ENCODE measurements at regions of chr1 and their contacts with region 1.

Region 1: DNA sequence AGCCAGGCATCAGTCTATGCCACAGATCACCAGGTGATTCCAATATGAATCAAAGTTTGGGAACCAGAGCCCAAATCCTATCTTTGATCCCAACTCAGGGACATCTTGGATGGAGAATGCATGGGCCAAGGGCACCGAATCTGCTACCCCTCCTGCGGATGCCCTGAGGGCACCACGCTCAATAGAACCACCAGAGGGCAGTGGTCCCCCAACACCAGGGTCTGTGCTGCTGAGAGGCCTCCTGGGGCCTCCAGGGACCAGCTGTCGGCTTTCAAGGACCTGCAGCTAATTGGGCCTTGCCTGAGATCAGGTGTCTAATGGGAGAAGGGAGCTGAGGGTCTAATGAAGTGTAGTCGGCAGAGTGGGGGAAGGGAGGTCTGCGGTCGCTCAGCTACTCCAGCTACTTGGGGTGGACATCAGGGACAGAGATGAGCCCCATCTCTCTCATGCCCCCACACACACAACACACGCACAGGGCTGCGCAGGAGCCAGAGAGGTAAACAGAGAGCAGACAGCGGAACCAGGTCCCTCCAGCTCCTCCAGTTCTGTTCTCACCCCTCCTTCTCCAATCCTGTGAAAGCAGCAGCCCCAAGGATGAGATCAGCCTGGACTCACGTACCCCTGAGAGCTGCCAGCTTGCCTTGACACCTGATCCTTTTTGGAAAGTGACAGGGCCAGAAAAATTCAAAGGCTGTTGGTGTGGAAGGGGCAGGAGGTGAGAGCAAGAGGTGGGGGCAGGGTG is 34.9 kb upstream of the PPP1R15B start:
- DNase-seq: peak; percentile 61 to 83 (median 75)
- ATAC-seq: peak; percentile 97
- H3K4me3 ChIP-seq: no peak overlapping the region
- H3K4me3 Mint-ChIP-seq: no peak overlapping the region
- H3K27ac ChIP-seq: peak overlapping the region; percentile 4
- H3K27ac Mint-ChIP-seq: peak overlapping the region; percentile 54 to 92 (median 73)
- H3K4me1 ChIP-seq: peaks cover 0 to 8% of the 10 kb centered on the region in 2 donors
- H3K4me1 Mint-ChIP-seq: peaks cover 3 to 32% (median 10%) of the 10 kb centered on the region in 7 donors
- H3K27me3 ChIP-seq: no peaks in the 10 kb centered on the region
- H3K27me3 Mint-ChIP-seq: no peaks in the 10 kb centered on the region

Region 2: DNA sequence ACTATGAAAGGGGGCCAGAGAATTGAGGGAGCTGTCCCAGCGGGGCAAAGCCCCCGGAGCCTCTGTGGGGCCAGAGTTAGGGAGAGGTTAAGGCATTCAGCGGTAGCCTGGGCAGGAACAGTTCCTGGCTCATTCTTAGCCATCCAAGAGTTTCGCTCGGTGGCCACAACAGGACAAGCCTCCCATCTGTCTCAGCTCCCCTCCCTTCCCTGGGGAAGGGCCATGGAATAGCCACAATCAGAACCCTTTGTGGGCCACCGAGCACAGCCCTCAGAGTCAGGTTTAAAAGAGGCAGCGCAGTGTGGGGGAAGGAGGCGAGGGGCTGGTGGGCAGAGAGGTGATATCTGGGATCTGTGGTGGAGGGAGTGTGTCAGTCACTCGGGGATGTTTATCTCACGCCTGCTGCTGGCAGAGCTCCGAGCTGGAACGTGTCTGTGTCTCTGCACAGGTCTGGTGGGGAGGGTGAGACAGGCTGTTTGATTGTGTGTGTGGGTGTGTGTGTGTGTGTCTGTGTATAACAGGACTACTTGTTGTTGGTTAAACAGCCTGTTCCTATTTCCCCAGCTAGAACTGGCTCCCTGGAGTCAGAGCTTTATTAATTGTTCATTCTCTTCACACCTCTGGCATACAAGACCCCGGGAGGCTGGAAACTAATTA is 183.2 kb before region 1 on chr1:
- CTCF ChIA-PET with region 1: no interaction called
- POLR2A ChIA-PET with region 1: no interaction called
- intact Hi-C with region 1: no loop called
- DNase-seq: no peak
- ATAC-seq: no peak
- H3K4me3 ChIP-seq: no peak overlapping the region
- H3K4me3 Mint-ChIP-seq: peak overlapping the region in 1 of 10 donors; percentile 4
- H3K27ac ChIP-seq: no peak overlapping the region
- H3K27ac Mint-ChIP-seq: peak overlapping the region in 1 of 9 donors; percentile 63
- H3K4me1 ChIP-seq: no peaks in the 10 kb centered on the region
- H3K4me1 Mint-ChIP-seq: peaks cover 0 to 2% (median 0%) of the 10 kb centered on the region in 7 donors
- H3K27me3 ChIP-seq: no peaks in the 10 kb centered on the region
- H3K27me3 Mint-ChIP-seq: no peaks in the 10 kb centered on the region

Region 3: DNA sequence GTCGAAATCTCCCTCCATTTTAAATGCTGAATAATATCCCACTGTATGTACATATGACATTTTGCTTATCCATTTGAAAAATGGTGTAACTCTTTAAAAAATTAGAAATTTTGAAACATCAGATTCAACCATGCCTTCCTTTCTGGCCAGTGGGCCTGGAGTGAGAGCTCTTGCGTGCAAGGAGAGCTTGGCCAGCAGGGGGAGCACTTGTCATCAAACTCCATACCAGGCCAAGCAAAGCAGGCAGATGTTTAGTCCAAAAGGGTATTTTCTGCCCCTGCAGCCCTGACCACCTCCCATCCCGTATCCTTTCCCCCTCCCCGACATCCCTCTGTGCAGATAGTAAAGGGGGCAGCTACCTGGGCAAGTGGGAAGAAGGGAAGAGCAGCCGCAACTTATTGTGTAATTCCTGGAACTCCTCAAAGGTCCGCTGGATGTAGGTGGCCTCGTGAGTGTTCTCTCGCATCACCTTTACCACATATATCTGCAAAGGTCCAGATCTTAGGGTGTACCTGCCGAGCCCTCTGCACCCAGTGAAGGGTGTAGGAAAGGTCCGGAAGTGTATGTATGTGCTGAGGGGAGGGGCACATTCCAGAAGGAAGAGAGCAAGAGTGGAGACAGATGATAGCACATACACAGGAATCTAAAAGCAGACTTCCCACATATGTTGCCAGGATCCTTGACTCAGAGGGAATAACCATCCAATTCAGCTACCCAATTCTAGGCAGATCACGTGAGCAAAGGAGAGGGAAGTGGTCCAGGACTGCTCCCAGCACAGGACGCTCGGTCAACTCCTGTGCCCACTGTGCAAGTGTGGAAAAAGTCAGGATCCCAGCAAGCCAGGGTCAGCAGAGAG is 15.0 kb before region 1 on chr1:
- CTCF ChIA-PET with region 1: interaction called, 12 read pairs
- POLR2A ChIA-PET with region 1: no interaction called
- intact Hi-C with region 1: loop called in 1 of 2 experiments (anchors 1 kb)
- DNase-seq: peak; percentile 52 to 75 (median 69)
- ATAC-seq: peak; percentile 88
- H3K4me3 ChIP-seq: no peak overlapping the region
- H3K4me3 Mint-ChIP-seq: no peak overlapping the region
- H3K27ac ChIP-seq: no peak overlapping the region
- H3K27ac Mint-ChIP-seq: peak overlapping the region in 5 of 9 donors; percentile 6 to 69 (median 42)
- H3K4me1 ChIP-seq: no peaks in the 10 kb centered on the region
- H3K4me1 Mint-ChIP-seq: peaks cover 0 to 13% (median 4%) of the 10 kb centered on the region in 7 donors
- H3K27me3 ChIP-seq: no peaks in the 10 kb centered on the region
- H3K27me3 Mint-ChIP-seq: no peaks in the 10 kb centered on the region

Region 4: DNA sequence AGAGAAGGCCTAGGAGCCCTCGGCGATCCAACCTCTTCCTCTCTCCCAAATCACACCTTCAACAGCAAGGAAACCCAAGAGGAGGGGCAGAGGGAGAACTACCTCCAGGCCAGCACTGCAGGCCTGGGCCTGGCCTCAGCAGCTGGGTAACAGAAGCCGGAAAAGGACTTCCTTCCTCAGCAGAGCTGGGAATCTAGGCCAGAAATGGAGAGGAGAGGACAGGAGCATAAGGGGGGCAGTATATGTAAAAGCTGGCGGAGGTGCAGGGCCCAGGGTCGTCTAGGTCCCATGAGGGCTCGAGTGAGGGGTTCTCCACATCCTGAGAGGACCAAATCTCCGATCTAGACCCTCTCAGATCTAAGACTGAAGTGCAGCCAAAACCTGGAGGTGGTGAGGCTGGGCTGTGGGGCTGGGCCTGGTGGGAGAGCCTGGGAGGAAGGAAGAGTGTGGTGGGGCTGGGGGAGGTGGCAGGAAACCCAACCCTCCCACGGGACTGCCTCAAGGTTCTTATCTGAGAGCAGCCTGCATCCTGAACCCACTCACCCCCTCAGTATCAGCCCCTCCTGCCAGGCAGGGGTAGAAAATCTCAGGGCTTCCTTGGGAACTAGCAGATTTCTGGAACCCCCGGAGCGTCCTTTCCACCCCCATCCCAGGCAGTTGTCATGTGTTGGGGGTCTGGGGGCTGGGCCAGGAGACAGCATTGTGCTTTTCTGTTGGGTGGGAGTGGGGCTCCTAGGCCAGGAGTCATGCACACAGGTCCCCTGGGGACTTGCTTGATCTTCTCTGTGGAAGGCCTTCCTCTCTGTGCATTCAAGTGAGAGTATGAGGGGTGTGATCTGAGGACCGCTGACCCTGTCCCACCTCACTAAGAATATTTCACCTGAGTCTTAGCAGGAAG is 15.0 kb after region 1 on chr1:
- CTCF ChIA-PET with region 1: interaction called, 8 read pairs
- POLR2A ChIA-PET with region 1: interaction called, 7 read pairs
- intact Hi-C with region 1: loop called in 1 of 2 experiments (anchors 2 kb)
- DNase-seq: peak in 6 of 9 donors; percentile 11 to 52 (median 17)
- ATAC-seq: peak; percentile 63
- H3K4me3 ChIP-seq: peak overlapping the region; percentile 37
- H3K4me3 Mint-ChIP-seq: peak overlapping the region; percentile 64 to 85 (median 74)
- H3K27ac ChIP-seq: peak overlapping the region; percentile 63
- H3K27ac Mint-ChIP-seq: peak overlapping the region; percentile 66 to 95 (median 85)
- H3K4me1 ChIP-seq: peaks cover 20 to 54% of the 10 kb centered on the region in 2 donors
- H3K4me1 Mint-ChIP-seq: peaks cover 38 to 74% (median 61%) of the 10 kb centered on the region in 7 donors
- H3K27me3 ChIP-seq: no peaks in the 10 kb centered on the region
- H3K27me3 Mint-ChIP-seq: no peaks in the 10 kb centered on the region

Region 5: GRCh38 chr1:204480515-204480914 is 34.0 kb after region 1 on chr1:
- CTCF ChIA-PET with region 1: interaction called, 10 read pairs
- POLR2A ChIA-PET with region 1: interaction called, 3 read pairs
- intact Hi-C with region 1: no loop called
- DNase-seq: no peak
- ATAC-seq: peak; percentile 26
- H3K4me3 ChIP-seq: no peak overlapping the region
- H3K4me3 Mint-ChIP-seq: peak overlapping the region in 7 of 10 donors; percentile 5 to 69 (median 61)
- H3K27ac ChIP-seq: no peak overlapping the region
- H3K27ac Mint-ChIP-seq: peak overlapping the region in 6 of 9 donors; percentile 43 to 84 (median 74)
- H3K4me1 ChIP-seq: peaks cover 13 to 44% of the 10 kb centered on the region in 2 donors
- H3K4me1 Mint-ChIP-seq: peaks cover 40 to 89% (median 80%) of the 10 kb centered on the region in 7 donors
- H3K27me3 ChIP-seq: no peaks in the 10 kb centered on the region
- H3K27me3 Mint-ChIP-seq: no peaks in the 10 kb centered on the region

Region 6: DNA sequence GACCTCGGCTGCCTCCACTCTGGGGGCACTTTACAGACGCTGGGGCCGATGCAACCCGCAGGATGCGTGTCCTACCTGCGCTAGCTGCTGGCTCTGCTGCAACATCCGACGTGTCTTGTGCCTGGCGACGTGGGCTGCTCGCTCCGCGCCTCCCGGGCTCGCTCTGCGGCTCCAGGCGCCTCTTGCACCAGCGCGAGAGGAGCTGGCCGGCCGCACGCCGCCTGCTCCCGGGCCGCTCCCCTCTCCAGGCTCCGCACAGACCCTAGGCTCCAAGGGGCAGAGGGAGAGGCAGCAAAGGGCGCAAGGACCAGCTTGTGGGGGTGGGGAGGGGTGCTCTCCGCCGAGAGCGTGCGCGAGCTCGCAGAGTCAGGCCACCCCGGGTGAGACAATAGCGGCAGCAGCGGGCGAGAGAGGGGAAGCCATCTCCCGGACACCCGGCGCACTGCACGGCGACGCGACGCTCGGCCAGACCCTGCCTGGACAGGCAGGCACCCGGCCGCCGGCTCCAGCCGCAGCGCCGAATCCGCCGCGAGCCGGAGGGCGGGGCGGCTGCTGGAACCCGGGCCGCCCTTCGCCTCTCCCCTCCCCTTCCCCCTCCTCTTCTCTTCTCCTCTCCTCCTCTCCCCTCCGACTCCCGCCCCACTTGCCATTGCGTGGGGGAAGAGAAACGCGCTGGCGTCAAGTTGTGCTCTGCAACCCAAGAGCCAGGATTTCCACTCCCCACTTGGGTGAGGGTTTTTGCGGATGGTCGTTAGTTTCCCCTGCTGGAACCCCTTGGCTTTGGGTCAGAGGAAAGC is 47.9 kb after region 1 on chr1 and contains the start of gene PIK3C2B:
- CTCF ChIA-PET with region 1: interaction called, 434 read pairs
- POLR2A ChIA-PET with region 1: interaction called, 21 read pairs
- intact Hi-C with region 1: loop called (anchors 2 kb)
- DNase-seq: peak; percentile 54 to 80 (median 72)
- ATAC-seq: peak; percentile 83
- H3K4me3 ChIP-seq: peak within 1 kb of the TSS; percentile 84
- H3K4me3 Mint-ChIP-seq: peak within 1 kb of the TSS; percentile 92 to 98 (median 95)
- H3K27ac ChIP-seq: peak within 1 kb of the TSS; percentile 87
- H3K27ac Mint-ChIP-seq: peak within 1 kb of the TSS; percentile 83 to 98 (median 93)
- H3K4me1 ChIP-seq: peaks cover 23 to 35% of the 10 kb centered on the region in 2 donors
- H3K4me1 Mint-ChIP-seq: peaks cover 37 to 89% (median 73%) of the 10 kb centered on the region in 7 donors
- H3K27me3 ChIP-seq: no peaks in the 10 kb centered on the region
- H3K27me3 Mint-ChIP-seq: peaks cover 0 to 2% (median 0%) of the 10 kb centered on the region in 5 donors
- total RNA-seq, gene PIK3C2B: 26.8 to 41.9 (median 32.5) TPM

Region 7: DNA sequence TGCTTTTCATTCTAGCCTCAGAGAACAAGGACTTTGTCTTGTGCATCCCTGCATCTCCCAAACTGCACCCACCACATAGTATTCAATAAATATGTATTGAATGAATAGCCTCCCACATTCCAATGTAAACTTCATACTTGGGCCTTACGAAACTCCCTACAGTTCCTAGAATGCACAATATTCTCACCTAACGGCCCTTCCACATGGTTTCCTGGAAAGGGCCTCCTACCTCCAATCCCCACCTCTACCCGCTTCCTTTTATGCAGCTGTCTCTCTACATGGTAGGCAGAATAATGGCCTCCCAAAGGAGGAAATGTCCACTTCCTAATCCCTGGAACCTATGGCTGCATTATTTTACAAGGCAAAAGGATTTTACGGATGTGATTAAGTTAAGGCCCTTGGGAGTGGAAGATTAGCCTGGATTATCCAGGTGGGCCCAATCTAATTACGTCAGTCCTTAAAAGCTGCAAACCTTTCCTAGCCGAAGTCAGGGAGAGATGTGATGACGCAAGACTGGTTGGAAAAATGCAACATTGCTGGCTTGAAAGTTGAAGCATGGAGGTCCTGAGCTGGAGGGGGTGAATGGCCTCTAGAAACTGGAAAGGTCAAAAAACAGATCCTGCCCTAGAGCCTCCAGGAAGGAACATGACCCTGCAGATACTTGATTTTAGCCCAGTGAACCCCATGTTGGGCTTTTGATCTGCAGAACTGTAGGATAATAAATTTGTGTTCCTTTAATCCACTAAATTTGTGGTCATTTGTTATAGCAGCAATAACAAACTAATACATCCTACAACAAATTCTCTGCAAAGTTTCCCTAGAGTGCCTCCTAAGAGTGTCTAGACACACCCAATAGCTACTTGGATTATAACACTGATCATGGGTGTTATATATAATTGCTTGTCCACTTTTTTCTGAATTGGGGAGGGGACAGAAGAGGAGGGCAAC is 53.3 kb after region 1 on chr1:
- CTCF ChIA-PET with region 1: interaction called, 434 read pairs
- POLR2A ChIA-PET with region 1: interaction called, 21 read pairs
- intact Hi-C with region 1: loop called (anchors 1 kb)
- DNase-seq: no peak
- ATAC-seq: no peak
- H3K4me3 ChIP-seq: no peak overlapping the region
- H3K4me3 Mint-ChIP-seq: no peak overlapping the region
- H3K27ac ChIP-seq: no peak overlapping the region
- H3K27ac Mint-ChIP-seq: peak overlapping the region in 1 of 9 donors; percentile 17
- H3K4me1 ChIP-seq: peaks cover 6 to 14% of the 10 kb centered on the region in 2 donors
- H3K4me1 Mint-ChIP-seq: peaks cover 12 to 57% (median 44%) of the 10 kb centered on the region in 7 donors
- H3K27me3 ChIP-seq: no peaks in the 10 kb centered on the region
- H3K27me3 Mint-ChIP-seq: peaks cover 0 to 2% (median 0%) of the 10 kb centered on the region in 5 donors

Region 8: DNA sequence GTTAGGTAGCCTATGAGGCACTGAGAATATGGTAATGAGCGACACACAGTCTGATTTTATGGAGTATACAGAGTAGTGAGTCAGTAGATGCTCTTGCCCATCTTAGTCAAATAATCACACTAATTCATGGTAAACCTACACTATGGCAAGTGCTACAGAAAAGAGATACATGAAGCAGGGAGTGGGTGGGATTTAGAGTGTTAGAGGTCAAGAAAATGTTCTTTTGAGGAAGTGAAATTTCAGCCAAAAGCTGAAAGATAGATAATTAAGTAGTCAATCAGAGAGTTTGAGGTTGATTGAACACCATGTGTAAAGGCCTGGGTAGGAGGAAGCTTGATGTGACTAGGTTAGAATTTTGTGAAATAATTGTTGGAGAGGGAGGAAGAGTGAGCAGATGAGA is 84.4 kb after region 1 on chr1:
- CTCF ChIA-PET with region 1: no interaction called
- POLR2A ChIA-PET with region 1: no interaction called
- intact Hi-C with region 1: no loop called
- DNase-seq: no peak
- ATAC-seq: no peak
- H3K4me3 ChIP-seq: no peak overlapping the region
- H3K4me3 Mint-ChIP-seq: no peak overlapping the region
- H3K27ac ChIP-seq: peak overlapping the region; percentile 15
- H3K27ac Mint-ChIP-seq: peak overlapping the region in 7 of 9 donors; percentile 1 to 67 (median 27)
- H3K4me1 ChIP-seq: peaks cover 0 to 9% of the 10 kb centered on the region in 2 donors
- H3K4me1 Mint-ChIP-seq: peaks cover 14 to 56% (median 29%) of the 10 kb centered on the region in 7 donors
- H3K27me3 ChIP-seq: no peaks in the 10 kb centered on the region
- H3K27me3 Mint-ChIP-seq: no peaks in the 10 kb centered on the region

Region 9: GRCh38 chr1:204763706-204764427 is 317.3 kb after region 1 on chr1:
- CTCF ChIA-PET with region 1: no interaction called
- POLR2A ChIA-PET with region 1: no interaction called
- intact Hi-C with region 1: loop called in 1 of 2 experiments (anchors 5 kb)
- DNase-seq: peak; percentile 44 to 80 (median 66)
- ATAC-seq: peak; percentile 96
- H3K4me3 ChIP-seq: peak overlapping the region; percentile 27
- H3K4me3 Mint-ChIP-seq: peak overlapping the region; percentile 46 to 74 (median 60)
- H3K27ac ChIP-seq: no peak overlapping the region
- H3K27ac Mint-ChIP-seq: no peak overlapping the region
- H3K4me1 ChIP-seq: peaks cover 4 to 9% of the 10 kb centered on the region in 2 donors
- H3K4me1 Mint-ChIP-seq: peaks cover 6 to 16% (median 7%) of the 10 kb centered on the region in 7 donors
- H3K27me3 ChIP-seq: no peaks in the 10 kb centered on the region
- H3K27me3 Mint-ChIP-seq: peaks cover 3 to 41% (median 11%) of the 10 kb centered on the region in 5 donors